A673 (cell line): ENCODE measurements at regions of chr5 and their contacts with region 1.

Region 1: DNA sequence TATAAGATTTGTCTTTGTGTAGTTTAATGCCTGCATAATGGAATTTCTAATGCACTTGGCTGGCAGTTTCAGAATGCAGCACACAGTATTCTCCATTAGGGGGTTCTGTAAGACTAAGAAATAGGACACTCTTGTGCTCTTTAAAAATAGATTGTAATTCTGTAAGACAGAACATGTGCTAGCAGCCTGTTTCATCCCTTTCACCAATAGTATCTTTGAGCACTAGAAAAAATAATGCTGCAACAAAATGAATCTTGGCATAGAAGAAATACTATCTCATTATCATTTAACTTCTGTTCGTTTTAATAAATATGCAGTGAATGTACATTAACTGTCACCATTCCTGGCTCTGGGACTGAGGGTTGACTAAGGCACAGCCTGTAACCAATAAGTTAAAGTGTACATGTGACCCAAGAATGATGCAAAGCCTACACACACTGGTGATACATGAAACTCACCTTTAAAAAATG is 23.8 kb upstream of the ZNF622 start:
- DNase-seq: peak; percentile 66
- H3K4me3 ChIP-seq: no peak overlapping the region
- H3K27ac ChIP-seq: no peak overlapping the region
- H3K4me1 ChIP-seq: peaks cover 7% of the 10 kb centered on the region
- H3K27me3 ChIP-seq: no peaks in the 10 kb centered on the region
- CTCF ChIP-seq: peak; percentile 76

Region 2: DNA sequence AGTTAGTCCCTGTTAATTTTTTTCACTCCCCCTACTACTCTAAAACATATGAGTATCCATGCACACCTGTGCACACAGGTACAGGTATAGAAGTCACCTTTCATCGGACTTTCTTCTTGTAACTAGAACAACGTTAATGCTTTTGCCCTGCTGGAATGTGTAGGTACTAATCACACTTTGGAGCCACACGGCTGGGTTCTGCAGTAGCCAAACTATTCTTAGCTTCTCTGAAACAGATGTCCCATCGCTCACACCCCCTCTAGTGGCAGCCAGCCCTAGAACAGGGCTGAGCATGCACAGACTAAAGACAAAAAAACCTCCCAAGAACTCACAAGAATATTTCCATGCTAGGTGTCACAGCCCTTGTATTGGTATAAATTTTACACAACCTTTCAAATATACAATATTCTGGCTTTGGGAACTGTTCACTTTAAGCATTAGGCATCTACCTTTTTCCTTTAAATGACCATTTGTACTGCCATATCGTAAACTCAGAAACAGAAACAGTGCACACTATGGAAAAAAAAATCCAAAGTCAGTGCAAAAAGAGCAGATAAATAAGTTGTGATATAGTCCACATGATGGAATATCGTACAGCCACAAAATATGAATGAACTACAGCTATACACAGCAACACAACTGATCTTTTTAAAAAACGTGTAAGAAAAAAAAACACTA is 63.4 kb after region 1 on chr5:
- CTCF ChIA-PET with region 1: interaction called, 20 read pairs
- POLR2A ChIA-PET with region 1: no interaction called
- intact Hi-C with region 1: loop called (anchors 1 kb)
- DNase-seq: peak; percentile 79
- H3K4me3 ChIP-seq: no peak overlapping the region
- H3K27ac ChIP-seq: no peak overlapping the region
- H3K4me1 ChIP-seq: peaks cover 11% of the 10 kb centered on the region
- H3K27me3 ChIP-seq: no peaks in the 10 kb centered on the region
- CTCF ChIP-seq: peak; percentile 94

Region 3: GRCh38 chr5:16679863-16680262 is 190.5 kb after region 1 on chr5:
- CTCF ChIA-PET with region 1: no interaction called
- POLR2A ChIA-PET with region 1: no interaction called
- intact Hi-C with region 1: loop called (anchors 5 kb)
- DNase-seq: peak; percentile 31
- H3K4me3 ChIP-seq: no peak overlapping the region
- H3K27ac ChIP-seq: no peak overlapping the region
- H3K4me1 ChIP-seq: no peaks in the 10 kb centered on the region
- H3K27me3 ChIP-seq: no peaks in the 10 kb centered on the region
- CTCF ChIP-seq: peak; percentile 47; the same call in 1 of the 2 replicates

Region 4: GRCh38 chr5:16784843-16785791 is 295.8 kb after region 1 on chr5:
- CTCF ChIA-PET with region 1: no interaction called
- POLR2A ChIA-PET with region 1: no interaction called
- intact Hi-C with region 1: loop called (anchors 10 kb)
- DNase-seq: no peak
- H3K4me3 ChIP-seq: no peak overlapping the region
- H3K27ac ChIP-seq: no peak overlapping the region
- H3K4me1 ChIP-seq: peaks cover 40% of the 10 kb centered on the region
- H3K27me3 ChIP-seq: no peaks in the 10 kb centered on the region
- CTCF ChIP-seq: no peak

Region 5: GRCh38 chr5:17204133-17204489 is 714.8 kb after region 1 on chr5:
- CTCF ChIA-PET with region 1: no interaction called
- POLR2A ChIA-PET with region 1: no interaction called
- intact Hi-C with region 1: loop called (anchors 2 kb)
- DNase-seq: no peak
- H3K4me3 ChIP-seq: no peak overlapping the region
- H3K27ac ChIP-seq: peak overlapping the region; percentile 11
- H3K4me1 ChIP-seq: peaks cover 23% of the 10 kb centered on the region
- H3K27me3 ChIP-seq: no peaks in the 10 kb centered on the region
- CTCF ChIP-seq: no peak